Head of caudate nucleus (tissue), 42 donors: ENCODE measurements at regions of chr9 and their contacts with region 1.

Region 1: DNA sequence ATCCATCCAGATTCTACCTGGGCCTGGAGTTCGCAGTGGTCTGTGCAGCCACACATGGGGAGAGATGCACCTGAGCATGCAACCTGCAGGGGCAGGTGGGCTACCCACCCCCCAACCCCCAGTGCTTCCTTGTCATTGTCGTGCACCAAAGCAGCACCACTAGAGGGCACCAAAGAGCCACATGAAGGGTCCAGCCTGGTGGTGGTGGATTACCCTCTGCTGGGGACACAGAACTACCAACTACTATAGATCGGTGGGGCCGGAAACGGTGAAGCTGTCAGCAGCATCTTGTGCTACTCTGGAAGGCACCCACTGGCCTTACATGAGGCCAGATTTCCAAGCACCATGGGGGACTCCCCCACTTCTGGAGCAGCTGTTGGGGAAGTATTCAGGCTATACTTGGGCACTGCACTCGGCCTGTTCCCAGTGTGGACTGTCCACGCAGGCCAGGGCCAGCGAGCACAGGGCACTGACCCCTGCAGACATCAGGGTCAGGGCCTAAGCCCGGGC is 60.2 kb upstream of the TBC1D2 start:
- DNase-seq: peak; percentile 63 to 92 (median 82)

Region 2: GRCh38 chr9:98774746-98775145 is 459.1 kb after region 1 on chr9:
- intact Hi-C with region 1: loop called (anchors 5 kb)
- DNase-seq: peak in 2 of 42 donors; percentile 4 to 10